ENCODE measurements at regions of chr14 and their contacts with region 1.

Region 1: GRCh38 chr14:74762917-74763802 is at the start of gene YLPM1:
- DNase-seq: peak; percentile 96
- H3K4me3 ChIP-seq: peak within 1 kb of the TSS; percentile 77 to 98 (median 94)
- H3K27ac ChIP-seq: peak within 1 kb of the TSS; percentile 87 to 98 (median 90)
- H3K4me1 ChIP-seq: peaks cover 0 to 50% (median 46%) of the 10 kb centered on the region in 4 donors
- H3K27me3 ChIP-seq: no peaks in the 10 kb centered on the region
- CTCF ChIP-seq: peak in 1 of 4 experiments; percentile 41
- EP300 ChIP-seq: no peak
- POLR2A ChIP-seq: peak; percentile 73 to 85
- total RNA-seq, gene YLPM1: 40.3 to 58.7 (median 40.6) TPM

Region 2: DNA sequence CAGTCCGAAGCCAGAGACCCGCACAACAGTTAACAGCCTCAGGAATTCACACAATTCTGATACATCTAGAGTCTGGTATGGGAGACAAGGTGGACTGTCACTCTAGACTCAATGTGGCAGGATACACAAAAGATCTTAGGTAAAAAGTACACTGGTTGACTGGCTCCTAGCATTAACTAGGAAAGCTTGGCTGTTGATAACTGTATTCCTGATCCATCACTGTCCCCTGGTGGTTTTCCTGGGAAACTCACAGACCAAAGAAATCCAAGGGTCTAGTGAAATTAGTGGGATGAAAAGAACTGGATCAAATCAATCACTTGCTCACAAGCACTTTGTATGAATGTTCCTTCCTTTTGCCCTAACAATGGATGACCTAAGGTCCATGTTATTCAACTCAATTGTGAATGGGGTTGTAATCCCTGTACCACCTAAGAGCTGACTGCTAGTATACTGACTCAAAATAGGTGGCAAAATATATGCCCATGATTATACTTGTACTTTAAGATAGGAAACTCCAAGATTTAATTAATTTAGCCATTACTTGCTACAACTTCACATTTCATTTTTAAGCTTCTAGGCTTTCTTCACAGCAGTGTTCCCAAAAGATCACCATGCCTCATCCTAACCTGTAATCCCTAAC is 284.0 kb before region 1 on chr14:
- intact Hi-C with region 1: no loop called
- DNase-seq: no peak
- H3K4me3 ChIP-seq: no peak overlapping the region
- H3K27ac ChIP-seq: no peak overlapping the region
- H3K4me1 ChIP-seq: no peaks in the 10 kb centered on the region
- H3K27me3 ChIP-seq: no peaks in the 10 kb centered on the region
- CTCF ChIP-seq: peak in 2 of 4 experiments; percentile 26 to 34
- EP300 ChIP-seq: no peak
- POLR2A ChIP-seq: no peak

Region 3: GRCh38 chr14:74627076-74627475 is 136.1 kb before region 1 on chr14:
- intact Hi-C with region 1: no loop called
- DNase-seq: no peak
- H3K4me3 ChIP-seq: no peak overlapping the region
- H3K27ac ChIP-seq: no peak overlapping the region
- H3K4me1 ChIP-seq: no peaks in the 10 kb centered on the region
- H3K27me3 ChIP-seq: no peaks in the 10 kb centered on the region
- CTCF ChIP-seq: no peak
- EP300 ChIP-seq: no peak
- POLR2A ChIP-seq: no peak

Region 4: GRCh38 chr14:74712499-74713394 is 50.4 kb before region 1 on chr14 and contains the starts of genes AREL1 and FCF1:
- intact Hi-C with region 1: loop called (anchors 5 kb)
- DNase-seq: peak; percentile 91
- H3K4me3 ChIP-seq: peak within 1 kb of the TSS; percentile 66 to 81 (median 80)
- H3K27ac ChIP-seq: peak within 1 kb of the TSS; percentile 84 to 89 (median 84)
- H3K4me1 ChIP-seq: peaks cover 0 to 48% (median 34%) of the 10 kb centered on the region in 4 donors
- H3K27me3 ChIP-seq: no peaks in the 10 kb centered on the region
- CTCF ChIP-seq: no peak
- EP300 ChIP-seq: peak in 1 of 4 donors; percentile 10
- POLR2A ChIP-seq: peak; percentile 65 to 74
- total RNA-seq, gene AREL1: 11.7 to 16.6 (median 14.3) TPM
- total RNA-seq, gene FCF1: 18.6 to 35.7 (median 28.3) TPM

Region 5: GRCh38 chr14:74824997-74825396 is 61.8 kb after region 1 on chr14:
- intact Hi-C with region 1: no loop called
- DNase-seq: no peak
- H3K4me3 ChIP-seq: no peak overlapping the region
- H3K27ac ChIP-seq: no peak overlapping the region
- H3K4me1 ChIP-seq: peaks cover 0 to 7% (median 0%) of the 10 kb centered on the region in 4 donors
- H3K27me3 ChIP-seq: no peaks in the 10 kb centered on the region
- CTCF ChIP-seq: no peak
- EP300 ChIP-seq: no peak
- POLR2A ChIP-seq: no peak

Measured in sigmoid colon (tissue), 7 donors.